ENCODE measurements at regions of chr9 and their contacts with region 1.

Region 1: GRCh38 chr9:35790385-35791296 is 750 bp upstream of the NPR2 start:
- H3K4me3 ChIP-seq: no peak overlapping the region
- H3K27ac ChIP-seq: no peak overlapping the region
- H3K4me1 ChIP-seq: no peaks in the 10 kb centered on the region
- CTCF ChIP-seq: peak; percentile 82

Region 2: GRCh38 chr9:35756275-35757225 is 34.1 kb before region 1 on chr9:
- CTCF ChIA-PET with region 1: interaction called, 12 read pairs
- POLR2A ChIA-PET with region 1: interaction called, 3 read pairs
- H3K4me3 ChIP-seq: peak overlapping the region; percentile 71
- H3K27ac ChIP-seq: peak overlapping the region; percentile 94
- H3K4me1 ChIP-seq: peaks cover 10% of the 10 kb centered on the region
- CTCF ChIP-seq: peak; percentile 89

Region 3: DNA sequence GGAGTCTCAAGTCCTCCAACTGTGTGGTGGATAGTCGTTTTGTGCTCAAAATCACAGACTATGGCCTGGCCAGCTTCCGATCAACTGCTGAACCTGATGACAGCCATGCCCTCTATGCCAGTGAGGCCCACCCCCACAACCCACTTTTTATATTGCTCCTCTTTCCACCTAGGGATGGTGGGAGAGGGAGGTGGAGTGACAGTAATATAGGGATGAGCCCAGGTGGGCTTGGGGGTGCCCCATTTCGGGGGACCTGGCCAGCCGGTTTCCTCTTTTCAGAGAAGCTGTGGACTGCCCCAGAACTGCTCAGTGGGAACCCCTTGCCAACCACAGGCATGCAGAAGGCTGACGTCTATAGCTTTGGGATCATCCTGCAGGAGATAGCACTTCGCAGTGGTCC is 14.9 kb after region 1 on chr9:
- CTCF ChIA-PET with region 1: interaction called, 24 read pairs
- POLR2A ChIA-PET with region 1: no interaction called
- H3K4me3 ChIP-seq: no peak overlapping the region
- H3K27ac ChIP-seq: no peak overlapping the region
- H3K4me1 ChIP-seq: no peaks in the 10 kb centered on the region
- CTCF ChIP-seq: no peak

Region 4: GRCh38 chr9:35826071-35826701 is 35.5 kb after region 1 on chr9:
- CTCF ChIA-PET with region 1: interaction called, 65 read pairs
- POLR2A ChIA-PET with region 1: no interaction called
- H3K4me3 ChIP-seq: no peak overlapping the region
- H3K27ac ChIP-seq: no peak overlapping the region; the same call in 1 of the 2 replicates
- H3K4me1 ChIP-seq: peaks cover 4% of the 10 kb centered on the region; the same call in 1 of the 2 replicates
- CTCF ChIP-seq: peak; percentile 65; the same call in 1 of the 2 replicates

Region 5: GRCh38 chr9:35882263-35882848 is 91.7 kb after region 1 on chr9:
- CTCF ChIA-PET with region 1: interaction called, 120 read pairs
- POLR2A ChIA-PET with region 1: interaction called, 5 read pairs
- H3K4me3 ChIP-seq: no peak overlapping the region
- H3K27ac ChIP-seq: no peak overlapping the region
- H3K4me1 ChIP-seq: no peaks in the 10 kb centered on the region
- CTCF ChIP-seq: peak; percentile 41; the same call in 1 of the 2 replicates

Region 6: GRCh38 chr9:35903049-35903448 is 112.4 kb after region 1 on chr9:
- CTCF ChIA-PET with region 1: interaction called, 14 read pairs
- POLR2A ChIA-PET with region 1: interaction called, 3 read pairs
- H3K4me3 ChIP-seq: no peak overlapping the region
- H3K27ac ChIP-seq: no peak overlapping the region
- H3K4me1 ChIP-seq: peaks cover 5% of the 10 kb centered on the region
- CTCF ChIP-seq: 0 out of 2 replicates have a peak, but pooled peaks have one; percentile 19

Region 7: DNA sequence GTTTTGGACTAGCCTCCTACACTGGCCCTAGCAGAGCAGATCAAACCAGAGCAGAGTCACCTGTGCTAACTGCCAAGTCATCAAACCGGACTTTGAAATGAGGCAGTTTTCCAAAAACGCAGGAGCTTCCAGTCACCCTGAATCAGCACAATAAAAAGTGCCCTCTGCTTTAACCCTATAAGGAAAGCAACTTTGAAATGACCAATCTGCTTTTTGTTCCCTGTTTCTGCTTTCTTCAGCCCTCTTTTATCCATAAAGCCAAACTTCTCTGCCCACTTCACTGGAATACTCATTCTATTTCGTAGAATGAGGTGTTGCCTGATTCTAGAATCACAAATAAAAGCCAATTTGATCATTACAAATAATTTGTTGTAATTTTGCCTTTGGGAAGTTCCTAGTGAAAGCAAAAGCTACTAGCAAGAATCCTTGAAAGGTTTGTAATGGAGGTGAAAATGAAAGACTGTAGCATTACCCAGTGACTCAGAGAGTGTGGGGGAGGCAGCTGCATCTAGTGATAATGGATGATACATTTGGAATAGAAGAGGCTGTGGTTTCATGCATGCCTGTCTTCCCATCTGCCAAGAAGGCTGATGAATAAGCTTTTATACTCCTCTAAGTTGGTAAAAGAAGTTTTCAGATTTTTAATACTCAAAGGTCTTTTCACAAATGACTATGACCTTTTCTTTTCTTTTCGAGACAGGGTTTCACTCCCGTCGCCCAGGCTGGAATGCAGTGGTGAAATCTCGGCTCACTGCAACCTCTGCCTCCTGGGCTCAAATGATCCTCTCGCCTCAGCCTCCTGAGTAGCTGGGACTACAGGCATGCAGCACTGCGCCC is 133.5 kb after region 1 on chr9:
- CTCF ChIA-PET with region 1: interaction called, 14 read pairs
- POLR2A ChIA-PET with region 1: no interaction called
- H3K4me3 ChIP-seq: no peak overlapping the region
- H3K27ac ChIP-seq: no peak overlapping the region
- H3K4me1 ChIP-seq: no peaks in the 10 kb centered on the region
- CTCF ChIP-seq: no peak

Region 8: GRCh38 chr9:36328798-36329411 is 538.3 kb after region 1 on chr9:
- CTCF ChIA-PET with region 1: no interaction called
- POLR2A ChIA-PET with region 1: no interaction called
- H3K4me3 ChIP-seq: no peak overlapping the region
- H3K27ac ChIP-seq: no peak overlapping the region
- H3K4me1 ChIP-seq: no peaks in the 10 kb centered on the region
- CTCF ChIP-seq: peak; percentile 20; the same call in 1 of the 2 replicates

Region 9: DNA sequence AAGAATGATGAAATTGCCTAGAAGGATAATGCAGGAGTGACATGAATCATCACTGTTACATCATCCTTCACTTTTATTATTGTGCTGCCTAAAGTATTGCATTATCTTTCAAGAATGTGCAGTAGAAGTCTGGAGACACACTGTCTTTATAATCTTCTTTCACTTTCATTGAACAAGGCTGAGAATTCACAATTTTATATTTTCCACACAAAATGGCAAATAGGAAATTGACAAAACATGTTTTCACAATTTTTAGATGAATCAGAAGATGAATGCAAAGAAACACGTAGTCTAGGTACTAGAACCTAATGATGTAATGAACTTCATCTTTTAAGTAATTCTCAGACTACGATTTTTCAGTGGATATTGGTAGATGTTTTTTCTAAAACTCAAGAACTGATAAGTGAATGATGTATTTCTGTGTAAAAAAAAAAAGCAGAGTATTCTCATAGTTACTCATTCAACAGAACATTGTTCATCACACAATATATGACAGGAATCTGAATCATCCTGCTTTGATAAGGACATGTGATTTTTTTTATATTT is 1500.4 kb after region 1 on chr9:
- CTCF ChIA-PET with region 1: no interaction called
- POLR2A ChIA-PET with region 1: no interaction called
- H3K4me3 ChIP-seq: no peak overlapping the region
- H3K27ac ChIP-seq: no peak overlapping the region
- H3K4me1 ChIP-seq: 0 out of 2 replicates have a peak, but pooled peaks cover 2% of the 10 kb centered on the region
- CTCF ChIP-seq: no peak